Activated CD8-positive, alpha-beta T cell treated with anti-CD3 and anti-CD28 coated beads, Interleukin-2, amount 10 ng/mL, durations not matched to agents 7 days and 5 days (primary cell): ENCODE measurements at regions of chr7 and their contacts with region 1.

Region 1: GRCh38 chr7:141014524-141015395 is at the start of gene MRPS33:
- DNase-seq: peak; percentile 97
- ATAC-seq: peak; percentile 98
- H3K4me3 Mint-ChIP-seq: peak within 1 kb of the TSS; percentile 99
- H3K27ac Mint-ChIP-seq: peak within 1 kb of the TSS; percentile 100
- H3K4me1 Mint-ChIP-seq: peaks cover 34% of the 10 kb centered on the region
- H3K27me3 Mint-ChIP-seq: peaks cover 18% of the 10 kb centered on the region
- total RNA-seq, gene MRPS33: 58.1 to 62.9 TPM

Region 2: GRCh38 chr7:140673063-140673773 is 341.5 kb before region 1 on chr7:
- CTCF ChIA-PET with region 1: interaction called, 12 read pairs
- POLR2A ChIA-PET with region 1: interaction called, 8 read pairs
- DNase-seq: peak; percentile 66
- ATAC-seq: peak; percentile 83
- H3K4me3 Mint-ChIP-seq: peak overlapping the region; percentile 85
- H3K27ac Mint-ChIP-seq: peak overlapping the region; percentile 87
- H3K4me1 Mint-ChIP-seq: peaks cover 42% of the 10 kb centered on the region
- H3K27me3 Mint-ChIP-seq: peaks cover 3% of the 10 kb centered on the region

Region 3: DNA sequence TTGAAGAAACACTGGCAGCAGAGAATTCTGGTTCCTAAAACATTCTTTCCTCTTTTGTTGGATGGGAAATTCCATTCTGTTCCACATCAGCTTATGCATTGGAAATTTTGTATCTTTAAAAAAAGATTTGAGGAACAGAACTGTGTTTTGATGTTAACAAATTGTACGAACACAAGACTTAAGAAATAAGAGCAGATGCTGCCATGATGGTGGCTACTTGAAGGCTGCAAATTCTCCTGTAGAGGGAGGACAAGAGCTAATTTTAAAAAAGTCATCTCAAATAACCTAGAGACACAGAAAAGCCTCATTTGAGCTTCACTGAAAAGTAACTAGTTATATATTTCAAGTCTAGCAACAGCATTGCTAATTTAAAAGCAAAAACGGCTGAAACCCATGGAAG is 288.5 kb before region 1 on chr7:
- CTCF ChIA-PET with region 1: interaction called, 19 read pairs
- POLR2A ChIA-PET with region 1: no interaction called
- DNase-seq: no peak
- ATAC-seq: no peak
- H3K4me3 Mint-ChIP-seq: no peak overlapping the region
- H3K27ac Mint-ChIP-seq: no peak overlapping the region
- H3K4me1 Mint-ChIP-seq: peaks cover 15% of the 10 kb centered on the region
- H3K27me3 Mint-ChIP-seq: no peaks in the 10 kb centered on the region

Region 4: GRCh38 chr7:140924019-140924820 is 90.5 kb before region 1 on chr7:
- CTCF ChIA-PET with region 1: interaction called, 3 read pairs
- POLR2A ChIA-PET with region 1: interaction called, 16 read pairs
- DNase-seq: peak; percentile 79
- ATAC-seq: peak; percentile 83
- H3K4me3 Mint-ChIP-seq: no peak overlapping the region
- H3K27ac Mint-ChIP-seq: no peak overlapping the region
- H3K4me1 Mint-ChIP-seq: peaks cover 5% of the 10 kb centered on the region
- H3K27me3 Mint-ChIP-seq: no peaks in the 10 kb centered on the region